WTC11 (cell line): ENCODE measurements at regions of chr5 and their contacts with region 1.

Region 1: GRCh38 chr5:141878711-141879425 is 658 bp upstream of the PCDH1 start:
- DNase-seq: peak; percentile 90
- ATAC-seq: peak; percentile 30
- H3K4me3 Mint-ChIP-seq: peak overlapping the region; percentile 84
- H3K27ac Mint-ChIP-seq: peak overlapping the region; percentile 98
- H3K4me1 Mint-ChIP-seq: peaks cover 65% of the 10 kb centered on the region
- H3K27me3 Mint-ChIP-seq: peaks cover 6% of the 10 kb centered on the region; the same call in 1 of the 2 replicates
- CTCF ChIP-seq: peak; percentile 93

Region 2: DNA sequence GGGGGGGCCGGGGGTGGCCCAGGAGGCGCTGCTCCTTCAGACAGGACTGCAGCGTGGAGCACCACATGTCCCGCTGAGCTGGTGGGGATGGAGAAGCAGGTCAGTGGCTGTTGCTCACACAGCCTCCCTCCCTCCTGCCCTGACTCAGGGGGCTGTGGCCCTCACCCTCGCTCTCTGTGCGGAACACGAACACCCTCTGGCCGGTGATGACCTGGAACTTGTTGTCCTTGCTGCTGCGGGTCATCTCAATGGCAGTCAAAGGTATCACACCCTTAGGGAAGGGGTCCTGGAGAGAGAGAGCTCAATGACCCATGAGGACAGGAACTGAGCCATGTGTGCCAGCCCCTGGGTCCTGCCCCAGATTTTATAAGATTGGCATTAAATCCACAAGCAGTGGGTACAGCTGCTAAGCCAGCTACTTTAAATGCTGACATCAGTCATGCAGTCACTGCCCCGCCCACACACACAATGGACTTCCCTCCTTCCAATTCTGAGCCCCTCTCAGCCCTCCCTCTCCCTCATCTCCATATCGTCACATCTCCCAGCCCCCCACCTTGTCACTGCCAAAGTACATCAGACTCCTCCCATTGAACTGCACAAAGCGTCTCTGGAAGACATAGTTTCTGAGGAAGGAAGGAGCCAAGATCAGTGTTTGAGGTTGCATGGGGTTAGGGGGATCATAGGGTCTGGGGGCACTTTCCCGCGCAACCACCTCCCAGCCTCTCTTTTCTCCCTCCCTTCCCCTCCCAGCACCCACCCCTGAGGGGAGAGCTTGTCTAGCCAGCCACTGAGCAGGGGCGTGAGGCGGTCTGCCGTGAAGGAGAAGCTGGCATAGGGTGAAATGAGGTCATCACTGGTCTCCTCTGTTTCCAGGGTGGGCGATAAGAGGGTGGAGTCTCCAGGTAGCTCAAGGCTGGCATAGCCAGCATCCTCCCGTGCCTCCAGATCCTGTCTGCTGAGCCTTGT is 205.7 kb before region 1 on chr5:
- CTCF ChIA-PET with region 1: interaction called, 13 read pairs
- POLR2A ChIA-PET with region 1: interaction called, 3 read pairs
- DNase-seq: no peak
- ATAC-seq: peak; percentile 2; the same call in 1 of the 2 replicates
- H3K4me3 Mint-ChIP-seq: no peak overlapping the region
- H3K27ac Mint-ChIP-seq: peak overlapping the region; percentile 42
- H3K4me1 Mint-ChIP-seq: peaks cover 32% of the 10 kb centered on the region
- H3K27me3 Mint-ChIP-seq: no peaks in the 10 kb centered on the region
- CTCF ChIP-seq: no peak

Region 3: GRCh38 chr5:141747152-141748141 is 131.4 kb before region 1 on chr5:
- CTCF ChIA-PET with region 1: interaction called, 24 read pairs
- POLR2A ChIA-PET with region 1: no interaction called
- DNase-seq: peak; percentile 90
- ATAC-seq: peak; percentile 96
- H3K4me3 Mint-ChIP-seq: no peak overlapping the region
- H3K27ac Mint-ChIP-seq: no peak overlapping the region
- H3K4me1 Mint-ChIP-seq: peaks cover 16% of the 10 kb centered on the region
- H3K27me3 Mint-ChIP-seq: peaks cover 32% of the 10 kb centered on the region
- CTCF ChIP-seq: no peak

Region 4: GRCh38 chr5:141811287-141812155 is 67.3 kb before region 1 on chr5:
- CTCF ChIA-PET with region 1: interaction called, 406 read pairs
- POLR2A ChIA-PET with region 1: interaction called, 66 read pairs
- DNase-seq: peak; percentile 80
- ATAC-seq: peak; percentile 62
- H3K4me3 Mint-ChIP-seq: peak overlapping the region; percentile 61
- H3K27ac Mint-ChIP-seq: peak overlapping the region; percentile 61; the same call in 1 of the 2 replicates
- H3K4me1 Mint-ChIP-seq: peaks cover 85% of the 10 kb centered on the region
- H3K27me3 Mint-ChIP-seq: peaks cover 2% of the 10 kb centered on the region; the same call in 1 of the 2 replicates
- CTCF ChIP-seq: peak; percentile 67

Region 5: GRCh38 chr5:141849375-141850243 is 29.3 kb before region 1 on chr5:
- CTCF ChIA-PET with region 1: interaction called, 97 read pairs
- POLR2A ChIA-PET with region 1: interaction called, 42 read pairs
- DNase-seq: peak; percentile 94
- ATAC-seq: peak; percentile 47
- H3K4me3 Mint-ChIP-seq: peak overlapping the region; percentile 73
- H3K27ac Mint-ChIP-seq: peak overlapping the region; percentile 99
- H3K4me1 Mint-ChIP-seq: peaks cover 68% of the 10 kb centered on the region
- H3K27me3 Mint-ChIP-seq: no peaks in the 10 kb centered on the region
- CTCF ChIP-seq: no peak

Region 6: DNA sequence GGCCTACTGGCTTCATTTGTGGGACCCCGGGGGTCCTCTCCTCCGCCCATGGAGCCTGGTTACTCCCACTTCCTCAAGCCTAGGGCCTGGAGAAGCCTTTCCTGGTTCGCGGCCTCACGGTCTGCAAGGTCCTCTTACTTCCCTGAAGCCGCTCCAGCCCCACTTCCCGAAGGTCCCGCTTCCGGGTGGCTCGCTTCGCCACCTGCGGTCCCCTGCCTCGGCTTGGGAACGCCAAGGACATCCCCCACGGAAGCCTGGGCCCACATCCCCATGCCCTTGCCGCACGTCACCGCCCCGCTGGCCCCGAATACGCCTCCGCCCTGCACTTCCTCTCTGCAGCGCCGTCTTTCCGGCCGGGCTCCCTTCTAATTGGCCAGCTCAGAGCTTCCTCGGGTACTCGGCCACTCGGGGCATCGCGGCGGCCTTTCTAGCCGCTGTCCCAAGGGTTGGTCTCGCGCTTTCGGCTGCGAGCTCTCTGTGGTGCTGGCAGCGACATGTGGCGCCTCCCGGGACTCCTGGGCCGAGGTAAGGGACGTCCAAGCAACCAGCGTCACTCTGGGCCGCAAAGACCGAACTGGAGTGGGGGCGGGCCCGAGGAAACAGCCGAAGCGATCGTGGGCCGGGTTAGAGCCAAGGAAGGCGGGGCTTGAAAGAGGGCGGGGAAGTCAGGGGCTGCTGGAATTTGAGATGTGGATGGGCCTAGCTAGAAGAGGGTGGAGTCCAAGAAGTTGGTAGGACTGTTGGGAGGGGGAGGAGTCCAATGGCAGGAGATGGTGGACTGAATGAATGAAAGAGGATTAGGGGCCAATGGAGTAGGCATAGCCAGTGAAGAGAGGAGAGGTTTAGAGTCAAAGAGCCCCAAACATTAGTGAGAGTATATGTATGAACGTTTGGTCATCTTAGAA is 44.8 kb after region 1 on chr5 and contains the start of gene DELE1:
- CTCF ChIA-PET with region 1: interaction called, 74 read pairs
- POLR2A ChIA-PET with region 1: interaction called, 10 read pairs
- DNase-seq: peak; percentile 93
- ATAC-seq: peak; percentile 96
- H3K4me3 Mint-ChIP-seq: peak within 1 kb of the TSS; percentile 67
- H3K27ac Mint-ChIP-seq: peak within 1 kb of the TSS; percentile 87
- H3K4me1 Mint-ChIP-seq: peaks cover 15% of the 10 kb centered on the region
- H3K27me3 Mint-ChIP-seq: no peaks in the 10 kb centered on the region
- CTCF ChIP-seq: no peak
- total RNA-seq, gene DELE1: 79.3 to 83.8 TPM (median 81.5 TPM) in 3 replicates

Region 7: DNA sequence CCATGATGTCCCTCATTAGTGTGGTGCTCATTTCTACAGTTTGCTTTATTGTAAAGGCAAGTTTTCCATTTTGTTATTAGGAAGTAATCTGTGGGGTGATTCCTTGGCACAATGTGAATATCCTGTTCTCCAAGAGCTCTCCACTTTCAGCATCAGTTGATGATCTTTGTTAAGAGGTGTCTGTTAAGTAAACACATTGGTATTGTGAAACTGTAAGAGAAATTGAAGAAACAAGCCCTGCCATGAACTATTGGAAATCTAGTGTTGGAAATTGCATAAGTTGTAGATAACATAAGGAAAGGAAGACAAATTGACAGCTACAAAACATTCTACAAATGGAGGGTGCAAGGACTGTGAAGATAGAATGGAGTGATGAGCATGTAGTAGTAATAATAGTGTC is 107.2 kb after region 1 on chr5:
- CTCF ChIA-PET with region 1: no interaction called
- POLR2A ChIA-PET with region 1: no interaction called
- DNase-seq: no peak
- ATAC-seq: no peak
- H3K4me3 Mint-ChIP-seq: no peak overlapping the region
- H3K27ac Mint-ChIP-seq: 0 out of 2 replicates have a peak overlapping the region, but pooled peaks have one; percentile 1
- H3K4me1 Mint-ChIP-seq: no peaks in the 10 kb centered on the region
- H3K27me3 Mint-ChIP-seq: no peaks in the 10 kb centered on the region
- CTCF ChIP-seq: no peak

Region 8: GRCh38 chr5:142095651-142096330 is 216.9 kb after region 1 on chr5:
- CTCF ChIA-PET with region 1: no interaction called
- POLR2A ChIA-PET with region 1: no interaction called
- DNase-seq: no peak
- ATAC-seq: no peak
- H3K4me3 Mint-ChIP-seq: no peak overlapping the region
- H3K27ac Mint-ChIP-seq: no peak overlapping the region
- H3K4me1 Mint-ChIP-seq: peaks cover 24% of the 10 kb centered on the region
- H3K27me3 Mint-ChIP-seq: no peaks in the 10 kb centered on the region; the same call in 1 of the 2 replicates
- CTCF ChIP-seq: no peak